MCF 10A (cell line): ENCODE measurements at regions of chr20 and their contacts with region 1.

Region 1: GRCh38 chr20:59032023-59032712 is at the start of gene ATP5F1E:
- DNase-seq: peak; percentile 93
- H3K4me3 Mint-ChIP-seq: peak within 1 kb of the TSS; percentile 90
- H3K27ac Mint-ChIP-seq: peak within 1 kb of the TSS; percentile 78
- H3K4me1 Mint-ChIP-seq: peaks cover 33% of the 10 kb centered on the region
- H3K27me3 Mint-ChIP-seq: no peaks in the 10 kb centered on the region
- CTCF ChIP-seq: no peak
- total RNA-seq, gene ATP5F1E: 65.2 and 69.7 TPM in 2 replicates

Region 2: GRCh38 chr20:58870239-58871014 is 161.7 kb before region 1 on chr20:
- CTCF ChIA-PET with region 1: interaction called, 4 read pairs
- POLR2A ChIA-PET with region 1: interaction called, 10 read pairs
- intact Hi-C with region 1: no loop called
- DNase-seq: peak; percentile 75
- H3K4me3 Mint-ChIP-seq: no peak overlapping the region
- H3K27ac Mint-ChIP-seq: no peak overlapping the region
- H3K4me1 Mint-ChIP-seq: peaks cover 1% of the 10 kb centered on the region
- H3K27me3 Mint-ChIP-seq: peaks cover 26% of the 10 kb centered on the region
- CTCF ChIP-seq: peak; percentile 87

Region 3: GRCh38 chr20:58907399-58908137 is 124.6 kb before region 1 on chr20:
- CTCF ChIA-PET with region 1: no interaction called
- POLR2A ChIA-PET with region 1: interaction called, 14 read pairs
- intact Hi-C with region 1: no loop called
- DNase-seq: peak; percentile 95
- H3K4me3 Mint-ChIP-seq: peak overlapping the region; percentile 12
- H3K27ac Mint-ChIP-seq: peak overlapping the region; percentile 50
- H3K4me1 Mint-ChIP-seq: peaks cover 17% of the 10 kb centered on the region
- H3K27me3 Mint-ChIP-seq: no peaks in the 10 kb centered on the region
- CTCF ChIP-seq: no peak

Region 4: GRCh38 chr20:58993332-58994201 is 38.6 kb before region 1 on chr20:
- CTCF ChIA-PET with region 1: no interaction called
- POLR2A ChIA-PET with region 1: interaction called, 11 read pairs
- intact Hi-C with region 1: no loop called
- DNase-seq: no peak
- H3K4me3 Mint-ChIP-seq: no peak overlapping the region
- H3K27ac Mint-ChIP-seq: no peak overlapping the region
- H3K4me1 Mint-ChIP-seq: no peaks in the 10 kb centered on the region
- H3K27me3 Mint-ChIP-seq: no peaks in the 10 kb centered on the region
- CTCF ChIP-seq: no peak

Region 5: GRCh38 chr20:59020938-59021551 is 11.1 kb before region 1 on chr20:
- CTCF ChIA-PET with region 1: interaction called, 6 read pairs
- POLR2A ChIA-PET with region 1: interaction called, 70 read pairs
- intact Hi-C with region 1: no loop called
- DNase-seq: peak; percentile 82
- H3K4me3 Mint-ChIP-seq: peak overlapping the region; percentile 40
- H3K27ac Mint-ChIP-seq: peak overlapping the region; percentile 83
- H3K4me1 Mint-ChIP-seq: peaks cover 22% of the 10 kb centered on the region
- H3K27me3 Mint-ChIP-seq: no peaks in the 10 kb centered on the region
- CTCF ChIP-seq: no peak

Region 6: GRCh38 chr20:59063358-59064213 is 31.4 kb after region 1 on chr20:
- CTCF ChIA-PET with region 1: no interaction called
- POLR2A ChIA-PET with region 1: interaction called, 15 read pairs
- intact Hi-C with region 1: no loop called
- DNase-seq: peak; percentile 85
- H3K4me3 Mint-ChIP-seq: peak overlapping the region; percentile 2
- H3K27ac Mint-ChIP-seq: peak overlapping the region; percentile 69
- H3K4me1 Mint-ChIP-seq: peaks cover 10% of the 10 kb centered on the region
- H3K27me3 Mint-ChIP-seq: no peaks in the 10 kb centered on the region
- CTCF ChIP-seq: no peak